ENCODE measurements at regions of chr7 and their contacts with region 1.

Region 1: DNA sequence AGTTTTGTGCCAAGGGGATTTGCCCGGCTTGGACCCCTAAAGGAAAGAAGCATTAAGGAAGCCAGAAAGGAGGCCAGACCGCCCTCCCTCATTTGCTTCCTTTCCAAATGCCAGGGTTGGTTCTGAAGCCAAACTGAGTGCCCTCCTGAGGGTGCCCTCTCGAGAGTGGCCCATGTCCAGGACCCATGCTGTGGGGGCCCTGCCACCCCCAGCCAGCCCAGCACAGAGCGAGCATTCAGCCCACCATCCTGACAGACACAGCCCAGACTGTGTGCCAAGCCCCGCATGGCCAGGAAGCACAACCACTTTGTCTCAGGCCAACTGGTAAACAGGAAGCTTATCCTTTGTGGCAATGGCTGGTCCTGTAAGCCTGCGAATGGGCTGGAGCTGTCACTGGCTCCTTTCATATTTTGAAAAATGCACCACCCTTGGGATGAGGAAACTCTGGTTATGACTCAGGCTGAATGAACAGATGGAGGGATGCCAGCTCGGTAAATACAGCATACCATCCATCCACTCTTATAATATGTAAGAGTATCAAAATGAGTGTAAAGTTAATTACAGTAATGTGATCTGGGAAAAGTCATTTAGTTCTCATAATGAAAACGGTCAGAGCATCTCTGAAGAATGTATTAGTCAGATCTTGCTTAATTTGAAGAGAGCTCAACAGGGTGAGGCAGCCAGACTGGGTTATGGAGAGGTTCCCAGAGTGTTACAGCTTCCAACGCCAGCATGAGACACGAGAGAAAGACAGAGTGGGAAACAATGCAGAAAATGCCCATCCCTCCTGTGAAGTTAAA is 65.0 kb downstream of the STK17A start:
- DNase-seq: peak; percentile 81
- H3K4me3 Mint-ChIP-seq: peak overlapping the region; percentile 81
- H3K27ac Mint-ChIP-seq: peak overlapping the region; percentile 99
- H3K4me1 Mint-ChIP-seq: peaks cover 83% of the 10 kb centered on the region
- H3K27me3 Mint-ChIP-seq: no peaks in the 10 kb centered on the region

Region 2: DNA sequence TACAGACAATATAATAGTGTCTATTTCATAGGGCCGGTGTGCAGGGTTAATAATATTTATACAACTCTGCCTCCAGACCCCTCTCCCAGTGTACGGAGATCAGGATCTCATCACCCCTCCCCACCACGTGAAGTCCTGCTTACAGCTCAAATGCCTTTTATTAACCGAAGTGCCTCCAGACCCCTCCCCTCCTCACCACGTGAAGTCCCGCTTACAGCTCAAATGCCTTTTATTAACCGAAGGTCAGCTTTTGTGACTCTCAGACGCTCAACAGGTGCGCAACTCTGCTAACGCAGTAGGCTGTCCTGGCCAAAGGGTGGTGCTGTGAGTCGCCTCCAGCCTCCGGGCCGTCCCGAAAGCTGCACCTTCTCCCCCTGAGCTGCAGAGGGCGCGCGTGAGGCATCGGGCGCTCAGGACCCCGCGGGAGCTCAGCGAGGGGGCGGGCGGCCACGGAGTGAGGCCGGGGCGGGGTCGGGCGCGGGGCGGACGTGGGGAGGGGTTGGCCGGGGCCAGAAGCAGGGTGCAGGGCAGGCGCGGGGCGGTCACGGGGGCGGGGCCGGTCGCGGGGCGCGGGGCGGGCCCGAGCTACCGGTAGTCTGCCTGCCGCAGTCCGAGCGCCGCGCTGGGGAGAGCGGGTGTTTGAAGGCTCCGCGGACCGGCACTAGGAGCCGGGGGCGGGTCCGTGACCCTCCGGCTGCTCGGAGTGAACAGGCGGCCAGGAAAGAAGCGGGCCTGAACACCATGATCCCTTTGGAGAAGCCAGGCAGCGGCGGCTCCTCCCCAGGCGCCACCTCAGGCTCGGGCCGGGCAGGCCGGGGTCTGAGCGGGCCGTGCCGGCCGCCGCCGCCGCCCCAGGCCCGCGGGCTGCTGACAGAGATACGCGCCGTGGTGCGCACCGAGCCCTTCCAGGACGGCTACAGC is 65.1 kb before region 1 on chr7 and contains the start of gene STK17A:
- intact Hi-C with region 1: loop called (anchors 1 kb)
- DNase-seq: peak; percentile 98
- H3K4me3 Mint-ChIP-seq: peak within 1 kb of the TSS; percentile 93
- H3K27ac Mint-ChIP-seq: peak within 1 kb of the TSS; percentile 98
- H3K4me1 Mint-ChIP-seq: peaks cover 29% of the 10 kb centered on the region
- H3K27me3 Mint-ChIP-seq: peaks cover 22% of the 10 kb centered on the region
- total RNA-seq, gene STK17A: 30.8 and 33.9 TPM in 2 replicates

Region 3: GRCh38 chr7:43612599-43613589 is 35.0 kb before region 1 on chr7:
- intact Hi-C with region 1: loop called (anchors 1 kb)
- DNase-seq: peak; percentile 59
- H3K4me3 Mint-ChIP-seq: peak overlapping the region; percentile 29
- H3K27ac Mint-ChIP-seq: peak overlapping the region; percentile 74
- H3K4me1 Mint-ChIP-seq: peaks cover 39% of the 10 kb centered on the region
- H3K27me3 Mint-ChIP-seq: no peaks in the 10 kb centered on the region

Region 4: DNA sequence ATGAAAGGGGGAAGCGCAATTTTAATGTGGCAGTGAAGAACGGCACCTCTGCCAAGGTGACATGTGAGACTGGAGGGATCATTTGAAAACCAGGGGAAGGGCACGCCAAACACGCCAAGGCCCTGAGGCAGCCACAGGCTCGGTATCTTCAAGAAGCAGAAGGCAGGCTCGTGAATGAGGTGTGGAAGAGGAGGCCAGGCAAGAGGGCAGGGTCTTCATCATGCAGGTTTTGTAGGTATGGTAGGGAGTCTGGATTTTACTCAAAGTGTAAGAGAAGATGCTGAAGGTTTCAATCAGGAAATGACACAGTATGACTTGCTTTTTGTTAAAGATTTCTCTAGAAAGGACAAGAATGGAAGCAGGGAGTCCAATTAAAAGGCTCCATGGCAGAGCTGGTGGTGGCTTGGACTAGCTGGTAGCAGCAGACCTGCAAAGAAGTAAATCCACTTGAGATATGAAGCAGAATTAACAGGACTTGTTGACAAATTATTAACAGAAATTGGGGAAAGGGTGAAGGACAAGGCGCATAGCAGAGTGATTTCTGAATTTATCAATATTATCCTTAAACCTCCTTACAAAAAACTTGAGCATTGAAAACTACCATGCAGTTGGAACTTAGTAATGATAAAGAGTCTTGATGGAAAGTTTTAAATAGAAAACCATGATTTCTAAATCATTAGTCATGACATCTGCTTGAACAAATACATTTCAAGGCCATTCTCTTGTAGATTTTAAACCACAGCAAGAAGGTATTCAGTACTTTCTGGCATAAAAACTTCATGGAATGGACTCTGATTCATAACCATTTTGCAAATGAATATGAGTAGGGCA is 11.1 kb after region 1 on chr7:
- intact Hi-C with region 1: loop called (anchors 1 kb)
- DNase-seq: peak; percentile 76
- H3K4me3 Mint-ChIP-seq: peak overlapping the region; percentile 55
- H3K27ac Mint-ChIP-seq: peak overlapping the region; percentile 93
- H3K4me1 Mint-ChIP-seq: peaks cover 44% of the 10 kb centered on the region
- H3K27me3 Mint-ChIP-seq: no peaks in the 10 kb centered on the region

Region 5: DNA sequence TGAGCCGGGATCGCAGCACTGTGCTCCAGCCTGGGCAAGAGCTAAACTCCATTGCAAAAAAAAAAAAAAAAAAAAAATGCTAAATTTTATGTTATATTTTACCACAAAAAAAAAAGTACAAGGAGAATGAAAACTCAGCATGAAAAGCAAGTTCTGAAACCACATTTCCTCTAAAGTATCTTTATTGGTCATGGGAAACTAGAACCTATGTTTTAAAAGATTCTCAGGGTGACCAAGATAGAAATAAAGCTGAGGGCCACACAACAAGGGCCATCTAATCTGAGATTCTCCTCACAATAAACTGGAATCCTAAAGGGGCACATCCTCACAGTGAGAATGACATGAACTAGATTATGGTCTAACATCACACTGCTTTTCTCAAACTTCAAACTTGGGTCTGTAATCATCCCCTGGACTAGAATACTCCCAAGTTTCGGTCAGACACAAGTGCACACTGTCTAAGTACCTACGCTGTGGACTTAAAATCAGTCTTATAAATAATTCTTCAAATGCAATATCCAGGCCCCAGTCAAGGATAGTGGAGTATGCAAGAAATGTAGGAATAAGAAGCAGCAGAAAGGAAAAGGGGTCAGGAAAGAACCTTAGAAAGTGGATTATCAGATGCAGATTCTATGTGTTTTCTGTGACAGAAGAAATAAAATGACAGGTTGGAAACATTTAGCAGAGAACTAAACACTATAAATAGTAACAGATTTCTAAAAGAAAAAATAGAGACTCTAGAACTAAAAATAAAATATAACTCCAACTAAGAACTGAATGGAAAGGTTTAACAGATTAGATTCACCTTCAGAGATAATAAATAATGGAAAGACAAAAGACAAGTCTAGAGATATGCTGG is 31.6 kb after region 1 on chr7:
- intact Hi-C with region 1: loop called (anchors 1 kb)
- DNase-seq: no peak
- H3K4me3 Mint-ChIP-seq: peak overlapping the region; percentile 34
- H3K27ac Mint-ChIP-seq: peak overlapping the region; percentile 66
- H3K4me1 Mint-ChIP-seq: peaks cover 43% of the 10 kb centered on the region
- H3K27me3 Mint-ChIP-seq: no peaks in the 10 kb centered on the region

Region 6: GRCh38 chr7:43729214-43729923 is 81.5 kb after region 1 on chr7 and contains the start of gene COA1:
- intact Hi-C with region 1: loop called (anchors 2 kb)
- DNase-seq: peak; percentile 95
- H3K4me3 Mint-ChIP-seq: peak within 1 kb of the TSS; percentile 94
- H3K27ac Mint-ChIP-seq: peak within 1 kb of the TSS; percentile 89
- H3K4me1 Mint-ChIP-seq: peaks cover 26% of the 10 kb centered on the region
- H3K27me3 Mint-ChIP-seq: peaks cover 3% of the 10 kb centered on the region
- total RNA-seq, gene COA1: 79.0 and 79.3 TPM in 2 replicates

Region 7: GRCh38 chr7:43834463-43835251 is 186.8 kb after region 1 on chr7:
- intact Hi-C with region 1: loop called (anchors 2 kb)
- DNase-seq: peak; percentile 79
- H3K4me3 Mint-ChIP-seq: peak overlapping the region; percentile 73
- H3K27ac Mint-ChIP-seq: peak overlapping the region; percentile 88
- H3K4me1 Mint-ChIP-seq: peaks cover 12% of the 10 kb centered on the region
- H3K27me3 Mint-ChIP-seq: peaks cover 6% of the 10 kb centered on the region